Esophagus squamous epithelium (tissue), 5 donors: ENCODE measurements at regions of chr13 and their contacts with region 1.

Region 1: DNA sequence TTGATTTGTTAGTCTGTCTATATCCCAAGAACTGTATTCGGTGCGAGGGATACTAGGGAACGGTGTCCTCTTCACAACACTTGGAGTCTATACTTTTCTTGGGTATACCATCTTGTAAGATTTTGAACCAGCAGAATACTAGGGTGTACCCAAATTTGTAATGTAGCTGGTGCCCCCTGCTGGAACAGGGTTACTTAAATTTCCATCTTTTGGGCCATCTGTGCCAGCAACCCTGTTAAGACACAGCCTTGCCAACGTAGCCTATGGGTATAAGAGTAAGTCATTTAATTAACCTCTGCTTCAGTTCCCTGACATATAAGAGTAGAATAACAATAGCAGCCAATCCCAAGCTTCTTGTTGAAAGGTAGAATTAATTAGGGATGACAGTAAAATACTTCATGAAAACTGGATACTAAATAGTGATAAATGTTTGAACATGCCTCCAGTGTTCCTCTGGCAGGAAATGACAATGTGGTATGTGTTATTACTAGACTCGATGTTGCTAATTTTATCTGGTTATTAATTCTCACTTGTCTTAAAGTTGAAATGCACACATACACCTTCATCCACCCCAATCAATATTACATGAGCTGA is 607.6 kb downstream of the FGF9 start:
- DNase-seq: no peak
- H3K4me3 ChIP-seq: no peak overlapping the region
- H3K27ac ChIP-seq: no peak overlapping the region
- H3K4me1 ChIP-seq: no peaks in the 10 kb centered on the region
- H3K27me3 ChIP-seq: no peaks in the 10 kb centered on the region
- CTCF ChIP-seq: peak; percentile 16 to 56 (median 37)
- POLR2A ChIP-seq: no peak

Region 2: DNA sequence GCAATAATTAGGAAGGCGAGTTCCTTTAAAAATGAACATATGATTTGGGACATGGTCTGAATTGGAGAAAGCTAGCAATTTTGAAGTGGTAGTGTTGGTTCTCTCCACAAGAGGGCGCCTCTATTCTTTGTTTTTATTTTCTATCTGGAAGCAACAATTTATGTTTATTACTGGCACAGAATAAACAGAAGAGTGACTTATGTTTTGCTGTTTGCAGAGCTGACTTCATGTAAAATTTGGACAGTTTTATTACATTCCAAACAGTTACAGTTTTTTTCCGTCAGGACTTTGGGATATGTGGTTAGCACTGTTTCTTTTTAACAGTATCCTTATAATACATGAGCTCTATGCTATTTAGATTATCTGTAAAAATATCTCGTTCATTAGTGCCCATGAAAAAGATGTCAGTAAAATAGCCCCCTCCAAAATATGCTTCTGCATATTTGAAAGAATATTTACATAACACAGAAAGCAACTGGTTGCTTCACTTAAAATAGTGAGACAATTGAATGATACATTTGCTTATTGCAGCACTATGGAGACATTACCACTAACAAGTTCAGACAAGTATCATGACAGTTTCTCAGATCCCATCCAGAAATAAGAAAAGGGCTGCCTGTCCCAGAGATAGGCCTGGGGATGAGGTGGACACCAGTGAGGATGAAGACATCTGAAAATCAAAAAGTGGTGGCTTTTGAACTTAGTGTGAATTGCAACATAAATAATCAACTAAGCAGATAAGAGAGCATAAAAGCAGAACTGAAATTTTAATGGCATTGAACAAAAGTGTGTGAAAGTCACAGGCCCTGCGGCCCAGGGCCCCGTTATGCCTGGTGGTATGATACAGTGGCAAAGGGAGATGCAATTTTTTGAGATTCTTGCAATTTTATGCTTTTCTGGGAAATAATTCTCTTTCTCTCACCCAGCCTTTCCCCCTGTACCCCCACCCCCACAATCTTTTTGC is 639.8 kb before region 1 on chr13:
- intact Hi-C with region 1: loop called (anchors 10 kb)
- DNase-seq: no peak
- H3K4me3 ChIP-seq: no peak overlapping the region
- H3K27ac ChIP-seq: no peak overlapping the region
- H3K4me1 ChIP-seq: peaks cover 0 to 13% (median 7%) of the 10 kb centered on the region in 3 donors
- H3K27me3 ChIP-seq: peaks cover 0 to 3% (median 0%) of the 10 kb centered on the region in 4 donors
- CTCF ChIP-seq: peak; percentile 51 to 80 (median 74)
- POLR2A ChIP-seq: no peak